ENCODE measurements at regions of chr7 and their contacts with region 1.

Region 1: GRCh38 chr7:91940572-91941341 is at the start of gene AKAP9:
- DNase-seq: peak; percentile 91
- H3K4me3 Mint-ChIP-seq: peak within 1 kb of the TSS; percentile 90
- H3K27ac Mint-ChIP-seq: peak within 1 kb of the TSS; percentile 94
- H3K4me1 Mint-ChIP-seq: peaks cover 29% of the 10 kb centered on the region
- H3K27me3 Mint-ChIP-seq: no peaks in the 10 kb centered on the region
- total RNA-seq, gene AKAP9: 20.0 to 26.2 TPM

Region 2: GRCh38 chr7:90346336-90347125 is 1594.2 kb before region 1 on chr7 and contains the start of gene GTPBP10:
- CTCF ChIA-PET with region 1: no interaction called
- intact Hi-C with region 1: loop called (anchors 10 kb)
- DNase-seq: peak; percentile 96
- H3K4me3 Mint-ChIP-seq: peak within 1 kb of the TSS; percentile 94
- H3K27ac Mint-ChIP-seq: peak within 1 kb of the TSS; percentile 96
- H3K4me1 Mint-ChIP-seq: peaks cover 34% of the 10 kb centered on the region
- H3K27me3 Mint-ChIP-seq: no peaks in the 10 kb centered on the region
- total RNA-seq, gene GTPBP10: 35.8 to 39.3 TPM

Region 3: DNA sequence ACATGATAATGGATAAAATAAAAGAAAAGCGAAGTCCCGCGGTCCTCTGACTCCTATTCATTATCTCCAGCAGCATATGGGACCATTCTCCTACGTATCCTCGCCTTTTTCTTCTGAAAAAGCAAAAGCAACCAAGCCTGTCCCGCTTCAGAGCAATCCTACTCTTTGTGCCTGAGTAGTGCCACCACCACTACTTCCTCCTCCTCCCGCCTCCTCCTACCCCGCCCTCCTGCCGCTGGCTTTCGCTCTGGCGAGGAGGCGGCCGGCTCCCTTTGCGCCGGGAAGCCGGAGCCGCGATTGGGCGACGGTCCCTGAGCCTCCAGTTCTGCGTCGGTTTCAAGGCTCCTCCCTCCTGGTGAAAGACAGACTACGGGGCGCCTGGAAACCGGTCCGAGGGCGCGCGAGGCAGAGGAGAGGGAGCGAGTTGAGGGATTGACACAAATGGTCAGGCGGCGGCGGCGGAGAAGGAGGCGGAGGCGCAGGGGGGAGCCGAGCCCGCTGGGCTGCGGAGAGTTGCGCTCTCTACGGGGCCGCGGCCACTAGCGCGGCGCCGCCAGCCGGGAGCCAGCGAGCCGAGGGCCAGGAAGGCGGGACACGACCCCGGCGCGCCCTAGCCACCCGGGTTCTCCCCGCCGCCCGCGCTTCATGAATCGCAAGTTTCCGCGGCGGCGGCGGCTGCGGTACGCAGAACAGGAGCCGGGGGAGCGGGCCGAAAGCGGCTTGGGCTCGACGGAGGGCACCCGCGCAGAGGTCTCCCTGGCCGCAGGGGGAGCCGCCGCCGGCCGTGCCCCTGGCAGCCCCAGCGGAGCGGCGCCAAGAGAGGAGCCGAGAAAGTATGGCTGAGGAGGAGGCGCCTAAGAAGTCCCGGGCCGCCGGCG is 676.5 kb before region 1 on chr7 and contains the start of gene FZD1:
- CTCF ChIA-PET with region 1: no interaction called
- intact Hi-C with region 1: loop called (anchors 10 kb)
- DNase-seq: peak; percentile 85
- H3K4me3 Mint-ChIP-seq: peak within 1 kb of the TSS; percentile 82
- H3K27ac Mint-ChIP-seq: no peak within 1 kb of the TSS
- H3K4me1 Mint-ChIP-seq: peaks cover 8% of the 10 kb centered on the region
- H3K27me3 Mint-ChIP-seq: peaks cover 53% of the 10 kb centered on the region
- total RNA-seq, gene FZD1: 0.29 to 0.30 TPM

Region 4: DNA sequence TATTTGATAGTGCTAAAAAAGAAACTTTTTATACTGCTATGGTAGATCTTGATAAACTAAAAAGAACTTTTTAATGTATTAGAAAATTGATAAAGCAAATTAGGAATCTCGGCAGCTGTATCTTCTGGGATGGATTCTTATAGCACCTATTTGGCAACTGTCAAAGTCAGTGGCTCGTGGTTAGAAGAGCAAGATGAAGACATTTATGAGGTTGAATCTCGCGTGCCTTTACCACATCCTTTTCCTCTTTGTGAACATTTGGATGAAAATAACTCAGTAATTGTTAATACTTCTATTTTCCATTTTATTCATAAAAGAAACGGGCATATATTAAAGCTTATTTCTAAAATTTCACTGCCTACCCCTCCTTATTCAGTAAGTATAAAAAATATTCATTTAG is 117.3 kb after region 1 on chr7:
- CTCF ChIA-PET with region 1: no interaction called
- intact Hi-C with region 1: no loop called
- DNase-seq: peak; percentile 8
- H3K4me3 Mint-ChIP-seq: no peak overlapping the region
- H3K27ac Mint-ChIP-seq: no peak overlapping the region
- H3K4me1 Mint-ChIP-seq: peaks cover 17% of the 10 kb centered on the region
- H3K27me3 Mint-ChIP-seq: no peaks in the 10 kb centered on the region

Region 5: GRCh38 chr7:92178927-92179924 is 238.5 kb after region 1 on chr7 and contains the start of gene LRRD1:
- CTCF ChIA-PET with region 1: no interaction called
- intact Hi-C with region 1: loop called (anchors 1 kb)
- DNase-seq: peak; percentile 94
- H3K4me3 Mint-ChIP-seq: peak within 1 kb of the TSS; percentile 72
- H3K27ac Mint-ChIP-seq: no peak within 1 kb of the TSS
- H3K4me1 Mint-ChIP-seq: peaks cover 10% of the 10 kb centered on the region
- H3K27me3 Mint-ChIP-seq: peaks cover 3% of the 10 kb centered on the region
- total RNA-seq, gene LRRD1: not detected

Region 6: GRCh38 chr7:92584996-92585395 is 644.2 kb after region 1 on chr7:
- CTCF ChIA-PET with region 1: no interaction called
- intact Hi-C with region 1: loop called (anchors 5 kb)
- DNase-seq: peak; percentile 22
- H3K4me3 Mint-ChIP-seq: peak overlapping the region; percentile 6
- H3K27ac Mint-ChIP-seq: peak overlapping the region; percentile 72
- H3K4me1 Mint-ChIP-seq: peaks cover 57% of the 10 kb centered on the region
- H3K27me3 Mint-ChIP-seq: no peaks in the 10 kb centered on the region

Measured in activated naive CD4-positive, alpha-beta T cell treated with anti-CD3 and anti-CD28 coated beads for 36 hours (primary cell).